ENCODE measurements at regions of chr4 and their contacts with region 1.

Region 1: GRCh38 chr4:84582302-84583000 is 476 bp upstream of the CDS1 start:
- DNase-seq: peak; percentile 91 to 96 (median 95)
- ATAC-seq: peak; percentile 95
- H3K4me3 ChIP-seq: peak overlapping the region; percentile 51
- H3K27ac ChIP-seq: no peak overlapping the region
- H3K4me1 ChIP-seq: peaks cover 4 to 17% of the 10 kb centered on the region in 2 experiments; a peak in 3 of 5 replicates
- H3K27me3 ChIP-seq: peaks cover 22 to 32% of the 10 kb centered on the region in 2 experiments
- CTCF ChIP-seq: no peak
- EP300 ChIP-seq: no peak
- POLR2A ChIP-seq: no peak
- RAD21 ChIP-seq: no peak

Region 2: DNA sequence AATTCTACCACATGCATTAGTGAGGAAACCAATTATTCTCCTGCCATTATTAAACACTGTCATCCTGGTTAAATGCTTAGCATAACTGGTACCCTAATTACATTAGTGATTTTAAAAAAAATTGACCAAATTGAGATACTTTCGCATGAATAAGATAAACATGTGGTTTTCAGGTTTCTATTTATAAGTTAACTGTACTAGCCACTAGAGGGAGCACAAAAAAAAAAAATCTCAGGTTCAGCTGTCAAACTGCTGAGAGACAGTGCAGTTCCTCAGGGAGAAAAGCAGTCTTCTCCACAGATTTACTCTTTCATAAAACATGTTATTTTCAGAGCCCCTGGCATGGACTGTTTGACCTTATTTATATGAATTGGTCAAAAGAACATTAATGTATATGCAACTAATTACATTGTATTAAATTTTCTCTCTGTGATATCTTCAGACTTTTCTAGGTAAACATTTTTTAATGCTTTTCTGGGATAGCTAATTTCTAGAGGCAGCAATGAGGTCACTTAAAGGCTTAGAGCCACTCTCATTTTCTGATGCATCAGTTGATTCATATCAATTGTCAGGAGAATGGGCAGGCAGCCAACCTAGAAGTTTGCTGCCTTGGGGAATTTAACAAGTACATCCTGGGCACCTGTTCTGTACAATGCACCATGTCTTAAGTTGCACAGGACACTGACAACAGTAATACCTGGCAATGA is 168.0 kb after region 1 on chr4:
- CTCF ChIA-PET with region 1: no interaction called
- POLR2A ChIA-PET with region 1: no interaction called
- in situ Hi-C with region 1: no loop called
- intact Hi-C with region 1: loop called (anchors 5 kb)
- DNase-seq: peak; percentile 35 to 47 (median 39)
- ATAC-seq: peak; percentile 83
- H3K4me3 ChIP-seq: no peak overlapping the region
- H3K27ac ChIP-seq: no peak overlapping the region
- H3K4me1 ChIP-seq: no peaks in the 10 kb centered on the region
- H3K27me3 ChIP-seq: no peaks in the 10 kb centered on the region
- CTCF ChIP-seq: peak; percentile 36 to 57 (median 56); a peak in 5 of 6 replicates
- EP300 ChIP-seq: no peak
- POLR2A ChIP-seq: no peak
- RAD21 ChIP-seq: peak; percentile 52 to 60; a peak in 3 of 4 replicates

Region 3: GRCh38 chr4:84966383-84967242 is 384.2 kb after region 1 on chr4 and contains the start of gene WDFY3:
- CTCF ChIA-PET with region 1: interaction called, 12 read pairs
- POLR2A ChIA-PET with region 1: no interaction called
- in situ Hi-C with region 1: loop called (anchors 5 kb)
- intact Hi-C with region 1: loop called (anchors 1 kb)
- DNase-seq: peak; percentile 58 to 83 (median 68)
- ATAC-seq: peak; percentile 92
- H3K4me3 ChIP-seq: peak within 1 kb of the TSS; percentile 63
- H3K27ac ChIP-seq: peak within 1 kb of the TSS; percentile 59
- H3K4me1 ChIP-seq: peaks cover 0 to 15% of the 10 kb centered on the region in 2 experiments; a peak in 3 of 5 replicates
- H3K27me3 ChIP-seq: no peaks in the 10 kb centered on the region
- CTCF ChIP-seq: no peak
- EP300 ChIP-seq: no peak
- POLR2A ChIP-seq: peak; percentile 64
- RAD21 ChIP-seq: no peak
- polyA plus RNA-seq, gene WDFY3: 0.58 to 0.95 TPM

Region 4: DNA sequence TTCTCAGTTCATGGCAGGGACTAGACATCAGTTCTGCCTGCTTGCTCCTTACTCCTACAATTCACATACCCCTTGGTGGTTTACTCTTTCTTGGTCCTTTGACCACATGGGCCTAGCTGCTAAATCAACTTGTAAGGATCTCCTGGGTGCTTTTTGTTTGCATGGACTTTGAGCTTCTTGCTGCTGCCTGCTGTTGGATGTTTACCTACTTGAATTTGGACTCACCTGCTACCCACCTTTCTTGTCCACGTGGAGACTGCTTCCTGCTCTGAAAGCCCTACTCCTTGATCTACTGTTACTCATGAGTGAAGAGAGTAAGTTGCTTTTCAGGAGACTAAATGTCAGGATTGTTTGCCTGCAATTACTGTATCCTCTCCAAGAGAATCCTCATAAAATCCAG is 877.3 kb after region 1 on chr4:
- CTCF ChIA-PET with region 1: no interaction called
- POLR2A ChIA-PET with region 1: no interaction called
- in situ Hi-C with region 1: no loop called
- intact Hi-C with region 1: loop called (anchors 5 kb)
- DNase-seq: no peak
- ATAC-seq: no peak
- H3K4me3 ChIP-seq: no peak overlapping the region
- H3K27ac ChIP-seq: no peak overlapping the region
- H3K4me1 ChIP-seq: no peaks in the 10 kb centered on the region
- H3K27me3 ChIP-seq: no peaks in the 10 kb centered on the region
- CTCF ChIP-seq: no peak
- EP300 ChIP-seq: no peak
- POLR2A ChIP-seq: no peak
- RAD21 ChIP-seq: no peak